ENCODE measurements at regions of chr11 and their contacts with region 1.

Region 1: DNA sequence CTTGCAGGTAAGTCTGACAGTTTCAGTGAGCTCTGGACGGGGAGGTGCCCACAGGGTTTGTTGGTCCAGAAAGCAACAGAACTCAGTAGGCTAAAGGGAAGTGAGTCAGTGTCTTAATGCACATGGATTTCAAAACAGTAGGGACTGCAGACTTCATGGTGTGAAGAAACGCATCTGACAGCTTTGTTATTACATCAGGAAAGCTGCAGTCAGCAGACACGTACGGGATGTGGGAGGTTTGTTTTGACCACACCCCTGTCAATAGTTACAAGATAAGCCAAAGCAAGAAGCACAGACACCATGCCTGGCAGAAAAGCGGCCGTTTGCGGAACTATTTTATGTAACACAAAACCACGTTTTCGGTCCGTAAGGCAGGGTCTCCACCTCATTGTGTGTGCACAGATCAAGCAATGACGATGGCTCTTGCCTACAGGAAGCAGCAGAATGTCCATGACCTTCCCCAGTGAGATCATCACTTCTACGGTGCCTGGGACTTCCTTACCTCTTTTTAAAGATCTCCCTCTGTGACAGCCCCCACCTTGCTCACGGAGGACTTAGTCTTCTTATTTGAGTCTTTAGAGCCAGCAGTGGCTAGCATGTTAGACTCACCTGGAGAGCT is 58.2 kb upstream of the FTH1 start:
- DNase-seq: peak; percentile 92
- ATAC-seq: peak; percentile 97
- H3K4me3 ChIP-seq: peak overlapping the region; percentile 16; the same call in 1 of the 2 replicates
- H3K27ac ChIP-seq: peak overlapping the region; percentile 80
- H3K4me1 ChIP-seq: peaks cover 21% of the 10 kb centered on the region
- H3K27me3 ChIP-seq: no peaks in the 10 kb centered on the region
- CTCF ChIP-seq: no peak

Region 2: GRCh38 chr11:61961570-61962212 is 63.9 kb before region 1 on chr11:
- CTCF ChIA-PET with region 1: no interaction called
- POLR2A ChIA-PET with region 1: interaction called, 11 read pairs
- intact Hi-C with region 1: no loop called
- DNase-seq: peak; percentile 35
- ATAC-seq: peak; percentile 1; the same call in 1 of the 2 replicates
- H3K4me3 ChIP-seq: no peak overlapping the region
- H3K27ac ChIP-seq: no peak overlapping the region
- H3K4me1 ChIP-seq: peaks cover 18% of the 10 kb centered on the region
- H3K27me3 ChIP-seq: no peaks in the 10 kb centered on the region
- CTCF ChIP-seq: no peak

Measured in PC-3 (cell line).